ENCODE measurements at regions of chr1 and their contacts with region 1.

Region 1: GRCh38 chr1:6245086-6245868 is 1.3 kb downstream of the HES3 start:
- DNase-seq: peak; percentile 43 to 92 (median 75)
- ATAC-seq: peak; percentile 88
- H3K4me3 ChIP-seq: no peak overlapping the region
- H3K4me3 Mint-ChIP-seq: peak overlapping the region in 1 of 10 donors; percentile 43
- H3K27ac ChIP-seq: no peak overlapping the region
- H3K27ac Mint-ChIP-seq: no peak overlapping the region
- H3K4me1 ChIP-seq: peaks cover 3 to 13% of the 10 kb centered on the region in 2 donors
- H3K4me1 Mint-ChIP-seq: peaks cover 5 to 19% (median 12%) of the 10 kb centered on the region in 7 donors
- H3K27me3 ChIP-seq: peaks cover 20 to 45% of the 10 kb centered on the region in 2 donors
- H3K27me3 Mint-ChIP-seq: peaks cover 37 to 73% (median 45%) of the 10 kb centered on the region in 5 donors

Region 2: DNA sequence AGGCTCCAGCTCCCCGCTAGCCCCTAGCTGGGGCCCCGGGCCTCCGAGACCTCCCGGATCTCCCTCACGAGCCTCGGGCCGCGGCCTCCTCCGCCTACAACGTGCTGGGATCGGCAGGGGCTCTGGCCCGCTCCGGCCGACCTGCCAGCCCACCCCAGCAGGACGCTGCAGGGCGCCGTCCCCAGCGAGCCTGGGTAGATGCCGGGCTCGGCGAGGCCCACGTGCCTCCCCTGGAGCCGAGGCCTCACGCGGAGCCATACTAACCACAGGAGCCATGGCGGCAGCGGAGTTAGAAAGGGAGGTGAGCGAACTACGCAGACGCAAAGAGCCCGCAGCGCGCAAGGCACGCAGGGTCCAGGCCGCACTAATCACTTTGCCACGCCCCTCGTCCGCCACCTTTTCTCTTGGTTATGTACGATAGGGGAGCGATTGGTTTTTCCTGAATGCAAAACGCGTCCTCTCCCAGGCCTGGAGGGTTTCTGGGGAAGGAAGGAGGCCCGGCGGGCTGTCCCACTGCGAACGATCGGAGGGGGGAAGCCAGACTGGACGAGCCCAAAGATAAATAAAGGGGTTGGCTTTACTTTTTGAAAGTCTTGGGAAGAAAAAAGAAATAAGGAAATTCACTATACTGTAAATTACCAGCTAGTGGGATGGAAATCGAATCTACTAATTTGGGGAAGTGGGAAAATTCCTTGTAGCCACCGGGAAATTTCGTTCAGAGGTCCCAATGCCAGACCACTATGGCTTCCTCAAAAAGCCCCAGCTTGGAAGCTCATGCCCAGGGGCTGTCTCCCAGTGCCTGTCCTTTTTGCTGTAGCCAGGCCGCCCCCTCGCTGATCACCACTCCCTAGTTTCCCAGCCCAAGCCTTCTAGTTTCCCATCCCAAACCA is 45.7 kb before region 1 on chr1 and contains the start of gene RPL22:
- CTCF ChIA-PET with region 1: interaction called, 3 read pairs
- POLR2A ChIA-PET with region 1: no interaction called
- intact Hi-C with region 1: loop called in 1 of 2 experiments (anchors 2 kb)
- DNase-seq: peak; percentile 79 to 98 (median 96)
- ATAC-seq: peak; percentile 99
- H3K4me3 ChIP-seq: peak within 1 kb of the TSS; percentile 79
- H3K4me3 Mint-ChIP-seq: peak within 1 kb of the TSS; percentile 85 to 98 (median 94)
- H3K27ac ChIP-seq: peak within 1 kb of the TSS; percentile 85
- H3K27ac Mint-ChIP-seq: peak within 1 kb of the TSS; percentile 82 to 96 (median 93)
- H3K4me1 ChIP-seq: peaks cover 24 to 25% of the 10 kb centered on the region in 2 donors
- H3K4me1 Mint-ChIP-seq: peaks cover 40 to 56% (median 47%) of the 10 kb centered on the region in 7 donors
- H3K27me3 ChIP-seq: no peaks in the 10 kb centered on the region
- H3K27me3 Mint-ChIP-seq: peaks cover 0 to under 1% (median 0%) of the 10 kb centered on the region in 5 donors
- total RNA-seq, gene RPL22: 431 to 720 (median 579) TPM

Region 3: DNA sequence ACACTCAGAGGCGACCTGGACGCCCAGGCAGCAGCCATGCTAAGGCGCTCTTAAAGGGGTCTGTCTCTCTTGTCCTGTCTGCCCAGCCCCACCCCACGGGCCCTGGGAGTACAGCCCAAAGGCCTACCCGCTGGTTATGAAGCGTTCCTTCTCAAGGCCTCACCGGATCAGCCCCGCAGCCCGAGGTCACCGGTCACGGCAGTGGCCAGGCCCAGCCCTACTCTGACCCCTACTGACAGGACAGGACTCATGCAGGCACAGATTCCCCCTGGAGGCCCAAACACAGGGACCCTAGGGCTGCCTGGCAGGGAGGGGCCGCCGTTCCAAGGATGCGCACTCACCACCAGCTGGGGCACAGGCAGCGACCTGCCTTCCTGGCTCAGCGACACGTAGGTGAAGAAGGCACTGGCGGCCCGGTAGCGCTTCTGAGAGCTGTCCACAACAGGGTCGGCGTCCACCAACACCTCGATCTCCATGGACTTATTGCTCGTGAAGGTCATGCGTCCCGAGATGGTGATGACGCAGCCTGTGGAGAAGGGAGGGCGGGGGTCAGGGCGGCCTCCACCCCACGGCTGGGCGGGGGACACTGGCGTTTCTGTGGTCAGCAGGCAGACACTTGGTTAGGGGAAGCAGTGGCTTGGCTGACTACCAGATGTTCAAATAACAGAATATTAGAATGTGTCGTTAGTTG is 35.6 kb after region 1 on chr1:
- CTCF ChIA-PET with region 1: no interaction called
- POLR2A ChIA-PET with region 1: no interaction called
- intact Hi-C with region 1: loop called in 1 of 2 experiments (anchors 2 kb)
- DNase-seq: no peak
- ATAC-seq: peak; percentile 32
- H3K4me3 ChIP-seq: no peak overlapping the region
- H3K4me3 Mint-ChIP-seq: no peak overlapping the region
- H3K27ac ChIP-seq: no peak overlapping the region
- H3K27ac Mint-ChIP-seq: no peak overlapping the region
- H3K4me1 ChIP-seq: no peaks in the 10 kb centered on the region
- H3K4me1 Mint-ChIP-seq: no peaks in the 10 kb centered on the region
- H3K27me3 ChIP-seq: no peaks in the 10 kb centered on the region
- H3K27me3 Mint-ChIP-seq: no peaks in the 10 kb centered on the region

Region 4: GRCh38 chr1:6423321-6423999 is 178.2 kb after region 1 on chr1:
- CTCF ChIA-PET with region 1: interaction called, 3 read pairs
- POLR2A ChIA-PET with region 1: no interaction called
- intact Hi-C with region 1: loop called in 1 of 2 experiments (anchors 5 kb)
- DNase-seq: peak; percentile 45 to 75 (median 66)
- ATAC-seq: peak; percentile 84
- H3K4me3 ChIP-seq: peak overlapping the region; percentile 15
- H3K4me3 Mint-ChIP-seq: peak overlapping the region; percentile 54 to 83 (median 72)
- H3K27ac ChIP-seq: no peak overlapping the region
- H3K27ac Mint-ChIP-seq: no peak overlapping the region
- H3K4me1 ChIP-seq: peaks cover 13 to 31% of the 10 kb centered on the region in 2 donors
- H3K4me1 Mint-ChIP-seq: peaks cover 0 to 14% (median 11%) of the 10 kb centered on the region in 7 donors
- H3K27me3 ChIP-seq: peaks cover 0 to 8% of the 10 kb centered on the region in 2 donors
- H3K27me3 Mint-ChIP-seq: peaks cover 18 to 60% (median 26%) of the 10 kb centered on the region in 5 donors

Region 5: DNA sequence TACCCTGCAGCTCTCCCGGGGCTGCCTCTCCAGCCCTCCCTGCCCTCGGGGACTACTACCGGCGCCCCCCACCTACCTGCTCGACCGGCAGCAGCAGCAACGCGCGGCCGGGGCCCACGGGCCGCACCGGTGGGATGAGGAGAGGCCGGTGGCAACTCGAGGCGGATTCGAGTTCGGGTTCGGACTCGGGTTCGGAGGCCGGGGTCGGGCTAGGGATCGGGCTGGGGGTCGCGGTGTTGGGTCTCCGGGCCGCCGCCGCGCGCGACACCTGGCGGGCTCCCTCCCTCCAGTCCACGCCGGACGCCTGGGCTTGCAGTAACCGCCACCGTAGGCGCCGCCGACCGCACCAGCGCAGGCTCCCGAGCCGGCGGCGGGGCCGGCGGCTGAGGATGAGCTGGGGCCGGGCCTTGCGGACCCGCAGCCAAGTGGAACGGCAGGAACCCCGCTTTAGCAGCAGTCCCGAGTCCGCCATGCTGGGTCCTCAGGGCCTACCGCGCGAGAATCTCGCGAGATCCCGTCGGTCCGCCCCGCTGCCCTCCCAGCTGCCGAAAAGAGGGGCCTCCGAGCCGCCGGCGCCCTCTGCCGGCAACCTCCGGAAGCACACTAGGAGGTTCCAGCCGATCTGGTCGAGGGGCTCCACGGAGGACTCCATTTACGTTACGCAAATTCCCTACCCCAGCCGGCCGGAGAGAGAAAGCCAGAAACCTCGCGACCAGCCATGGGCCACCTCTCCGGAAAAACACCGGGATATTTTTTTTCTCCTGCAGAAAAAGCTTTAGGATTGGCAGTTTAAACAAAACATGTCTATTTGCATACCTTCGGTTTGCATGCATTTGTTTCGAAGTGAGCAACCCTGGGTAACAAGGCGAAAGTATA is 309.0 kb after region 1 on chr1 and contains the start of gene NOL9:
- CTCF ChIA-PET with region 1: no interaction called
- POLR2A ChIA-PET with region 1: no interaction called
- intact Hi-C with region 1: loop called in 1 of 2 experiments (anchors 1 kb)
- DNase-seq: peak; percentile 90 to 97 (median 93)
- ATAC-seq: peak; percentile 100
- H3K4me3 ChIP-seq: peak within 1 kb of the TSS; percentile 79
- H3K4me3 Mint-ChIP-seq: peak within 1 kb of the TSS; percentile 77 to 85 (median 80)
- H3K27ac ChIP-seq: peak within 1 kb of the TSS; percentile 83
- H3K27ac Mint-ChIP-seq: peak within 1 kb of the TSS in 8 of 9 donors; percentile 60 to 85 (median 75)
- H3K4me1 ChIP-seq: peaks cover 8 to 20% of the 10 kb centered on the region in 2 donors
- H3K4me1 Mint-ChIP-seq: peaks cover 0 to 25% (median 17%) of the 10 kb centered on the region in 7 donors
- H3K27me3 ChIP-seq: no peaks in the 10 kb centered on the region
- H3K27me3 Mint-ChIP-seq: no peaks in the 10 kb centered on the region
- total RNA-seq, gene NOL9: 54.2 to 80.6 (median 73.8) TPM